Posterior vena cava (tissue), 2 donors: ENCODE measurements at regions of chr18 and their contacts with region 1.

Region 1: GRCh38 chr18:2655178-2655953 is at the start of gene SMCHD1:
- DNase-seq: peak; percentile 96
- total RNA-seq, gene SMCHD1: 50.8 to 54.2 TPM

Region 2: DNA sequence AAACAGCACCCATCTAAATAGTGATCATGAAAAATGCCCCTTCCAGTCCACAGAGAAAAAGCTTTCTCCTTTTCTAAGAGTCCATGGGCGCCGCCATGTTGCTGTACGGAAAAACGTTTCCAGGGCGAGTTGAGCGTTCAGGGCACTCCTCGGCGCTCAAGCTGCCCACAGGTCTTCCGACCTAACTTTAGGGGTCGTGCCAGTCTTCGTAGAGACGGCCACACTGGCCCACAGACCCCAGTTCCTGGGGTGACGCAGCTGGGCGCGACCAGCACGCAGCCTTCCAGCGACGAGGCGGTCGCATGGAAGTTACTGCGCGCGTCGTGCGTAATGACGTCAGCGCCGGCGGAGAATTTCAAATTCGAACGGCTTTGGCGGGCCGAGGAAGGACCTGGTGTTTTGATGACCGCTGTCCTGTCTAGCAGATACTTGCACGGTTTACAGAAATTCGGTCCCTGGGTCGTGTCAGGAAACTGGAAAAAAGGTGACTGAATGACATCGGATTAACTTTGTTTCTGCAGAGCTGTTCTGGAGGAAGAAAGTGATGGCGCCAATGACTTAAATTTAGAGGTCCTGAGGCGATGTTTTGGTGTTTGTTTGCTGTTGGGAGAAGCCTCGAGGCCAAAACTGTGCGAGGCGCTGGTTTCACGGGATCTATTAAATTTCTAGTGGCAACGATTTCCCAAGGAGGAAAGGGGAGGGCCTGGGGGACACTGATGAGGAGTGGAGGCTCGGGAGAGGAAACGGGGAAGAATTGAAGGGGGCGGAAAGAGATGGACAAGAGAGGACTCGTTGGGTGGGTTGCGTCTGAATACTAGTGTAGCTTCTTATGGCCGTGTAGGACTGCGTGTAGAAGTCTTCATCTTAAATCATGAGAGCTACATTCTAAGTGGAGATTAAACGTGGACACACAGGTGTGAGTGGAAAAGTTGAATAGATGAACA is 83.9 kb before region 1 on chr18 and contains the starts of genes METTL4 and NDC80:
- intact Hi-C with region 1: loop called in 1 of 2 experiments (anchors 2 kb)
- DNase-seq: peak; percentile 96
- total RNA-seq, gene METTL4: 7.4 to 8.6 TPM
- total RNA-seq, gene NDC80: 0.48 to 1.4 TPM

Region 3: GRCh38 chr18:2606335-2606734 is 49.0 kb before region 1 on chr18:
- intact Hi-C with region 1: no loop called
- DNase-seq: no peak